GM13976 (cell line): ENCODE measurements at regions of chr1 and their contacts with region 1.

Region 1: DNA sequence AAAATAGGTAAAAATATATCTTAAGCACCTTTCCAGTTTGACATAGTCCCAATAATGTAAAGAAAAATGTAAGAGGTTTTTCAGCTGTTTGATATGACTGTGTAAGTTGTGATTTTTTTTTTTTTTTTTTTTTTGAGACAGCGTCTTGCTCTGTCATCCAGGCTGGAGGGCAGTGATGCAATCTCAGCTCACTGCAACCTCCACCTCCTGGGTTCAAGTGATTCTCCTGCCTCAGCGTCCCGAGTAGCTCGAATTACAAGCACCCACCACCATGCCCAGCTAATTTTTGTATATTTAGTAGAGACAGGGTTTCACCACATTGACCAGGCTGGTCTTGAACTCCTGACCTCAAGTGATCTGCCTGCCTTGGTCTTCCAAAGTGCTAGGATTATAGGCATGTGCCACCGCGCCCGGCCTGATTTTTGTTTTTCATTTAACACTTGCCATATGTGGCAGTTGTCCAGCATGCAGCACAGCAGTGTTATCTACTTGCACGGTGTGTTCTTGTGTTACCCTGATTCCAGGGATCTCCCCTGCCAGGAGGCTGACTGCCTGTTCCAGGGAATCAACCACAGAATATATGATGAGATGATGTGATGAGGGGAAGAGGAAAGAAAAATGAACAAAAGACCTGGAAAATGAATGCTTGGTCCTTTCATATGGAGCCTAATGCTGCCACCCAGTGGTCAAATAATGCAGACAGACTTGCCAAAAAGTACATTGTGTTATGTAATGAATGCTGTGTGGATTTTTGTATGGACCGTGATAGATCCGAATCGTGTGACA is 79.0 kb downstream of the RAVER2 start:
- DNase-seq: peak; percentile 57
- CTCF ChIP-seq: peak; percentile 68

Region 2: GRCh38 chr1:64268653-64269557 is 555.0 kb before region 1 on chr1:
- in situ Hi-C with region 1: loop called (anchors 25 kb)
- DNase-seq: peak; percentile 61
- CTCF ChIP-seq: peak; percentile 41

Region 3: DNA sequence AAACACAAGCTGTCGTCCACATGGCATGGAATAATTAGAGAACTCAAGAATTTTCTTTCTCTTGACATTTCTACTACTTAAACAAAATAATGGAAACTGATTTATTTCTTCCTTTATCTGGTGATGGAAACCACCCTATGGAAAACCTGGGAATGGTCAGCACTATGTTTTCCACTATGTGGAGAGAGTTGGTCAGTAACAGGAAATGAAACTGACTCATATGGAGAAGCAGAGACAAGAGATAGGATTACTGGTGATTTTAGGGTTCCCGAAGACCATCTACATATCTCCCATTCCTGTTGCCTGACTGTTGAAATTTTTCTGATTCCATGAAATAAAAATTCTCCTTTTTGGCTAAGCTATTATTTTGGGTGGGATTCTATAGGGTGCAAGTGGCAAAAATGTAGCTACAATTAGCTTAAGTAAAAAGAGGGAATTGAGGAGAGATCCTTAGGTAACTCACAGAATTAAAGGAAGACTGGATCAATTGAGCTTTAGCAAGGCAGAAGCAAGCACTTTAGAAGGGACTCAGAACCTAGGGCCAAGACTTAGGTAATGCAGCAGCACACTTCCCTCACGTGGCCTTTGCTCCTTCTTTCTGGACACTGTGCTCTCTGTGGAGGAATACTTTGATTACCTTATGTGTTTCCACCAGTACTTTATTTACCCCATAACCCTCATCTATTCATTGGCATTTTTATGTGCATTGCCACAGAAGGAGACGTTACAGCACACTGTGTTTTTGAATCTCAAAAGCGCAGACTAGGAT is 686.2 kb after region 1 on chr1:
- in situ Hi-C with region 1: no loop called
- DNase-seq: no peak
- CTCF ChIP-seq: no peak